ENCODE measurements at regions of chr1 and their contacts with region 1.

Region 1: DNA sequence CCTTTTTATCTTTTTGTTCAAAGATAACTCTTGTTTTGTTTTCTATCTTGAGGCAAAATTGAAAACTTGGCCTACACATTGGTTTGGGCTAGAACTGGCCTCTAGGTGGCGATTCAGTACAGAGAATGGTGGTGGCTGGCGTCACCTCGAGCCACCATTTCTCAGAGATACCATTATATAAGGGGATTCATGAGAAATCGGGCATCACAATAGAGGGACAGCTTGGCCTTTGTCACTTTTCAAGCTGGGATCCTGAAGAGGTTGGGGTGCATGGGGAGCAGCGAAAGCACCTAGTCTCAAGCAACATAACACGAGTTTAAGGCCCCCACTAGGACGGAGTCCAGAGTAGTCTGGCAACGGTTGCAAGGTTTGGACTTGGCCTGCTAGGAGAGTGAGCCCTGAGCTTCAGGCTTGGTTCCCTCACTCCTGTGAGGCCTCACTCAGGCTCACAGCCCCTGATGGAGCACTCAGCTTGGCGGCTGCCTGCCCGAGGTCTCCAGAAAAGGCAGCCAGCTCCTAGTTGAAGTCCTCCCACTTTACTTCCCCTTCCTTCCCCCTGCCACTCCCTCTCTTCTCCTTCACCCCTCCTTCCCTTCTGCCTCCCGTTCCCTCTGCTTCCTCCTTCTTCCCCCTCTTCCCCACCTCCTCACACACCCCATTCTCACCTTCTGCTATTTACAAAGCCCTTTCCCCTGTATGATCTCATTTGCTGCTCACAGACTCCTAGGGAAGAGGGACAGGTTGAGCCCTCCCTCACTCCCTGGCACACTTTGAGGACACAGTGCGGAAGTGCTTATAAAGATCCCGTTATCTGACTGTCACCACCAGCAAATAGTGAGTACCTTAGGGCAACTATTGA is 67.8 kb downstream of the LRIG2 start:
- DNase-seq: peak; percentile 60
- H3K4me3 ChIP-seq: no peak overlapping the region
- H3K27ac ChIP-seq: no peak overlapping the region
- H3K4me1 ChIP-seq: no peaks in the 10 kb centered on the region
- H3K27me3 ChIP-seq: no peaks in the 10 kb centered on the region
- CTCF ChIP-seq: peak; percentile 46 to 89 (median 82)
- POLR2A ChIP-seq: no peak

Region 2: GRCh38 chr1:113185463-113186104 is 44.8 kb after region 1 on chr1:
- intact Hi-C with region 1: no loop called
- DNase-seq: no peak
- H3K4me3 ChIP-seq: no peak overlapping the region
- H3K27ac ChIP-seq: no peak overlapping the region
- H3K4me1 ChIP-seq: no peaks in the 10 kb centered on the region
- H3K27me3 ChIP-seq: no peaks in the 10 kb centered on the region
- CTCF ChIP-seq: no peak
- POLR2A ChIP-seq: no peak

Region 3: GRCh38 chr1:113242481-113242880 is 101.7 kb after region 1 on chr1:
- intact Hi-C with region 1: loop called (anchors 10 kb)
- DNase-seq: peak; percentile 81
- H3K4me3 ChIP-seq: no peak overlapping the region
- H3K27ac ChIP-seq: peak overlapping the region; percentile 30 to 55
- H3K4me1 ChIP-seq: no peaks in the 10 kb centered on the region
- H3K27me3 ChIP-seq: no peaks in the 10 kb centered on the region
- CTCF ChIP-seq: no peak
- POLR2A ChIP-seq: no peak